KBM-7 (cell line): ENCODE measurements at regions of chr10 and their contacts with region 1.

Region 1: DNA sequence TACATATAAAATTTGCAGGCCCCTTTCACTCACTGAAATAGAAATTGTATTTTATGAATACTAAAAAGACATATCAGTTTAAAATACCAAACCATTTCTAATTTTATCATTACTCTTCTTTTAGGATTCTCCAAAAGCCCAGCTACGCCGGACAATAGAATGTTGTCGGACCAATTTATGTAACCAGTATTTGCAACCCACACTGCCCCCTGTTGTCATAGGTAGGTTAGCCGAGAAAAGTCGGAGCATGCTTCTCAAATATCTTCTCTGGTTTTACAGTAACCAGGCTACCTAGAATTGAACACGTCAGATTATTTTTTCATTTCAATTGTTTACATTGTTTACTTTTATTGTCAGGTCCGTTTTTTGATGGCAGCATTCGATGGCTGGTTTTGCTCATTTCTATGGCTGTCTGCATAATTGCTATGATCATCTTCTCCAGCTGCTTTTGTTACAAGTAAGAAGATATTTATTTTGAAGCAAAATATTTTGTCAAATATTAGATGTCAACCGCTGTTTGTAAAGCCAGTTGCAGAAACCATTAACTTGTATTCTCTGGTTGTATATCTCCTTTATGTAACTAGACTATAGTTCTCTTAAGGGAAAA is 57.6 kb downstream of the MMRN2 start:
- DNase-seq: peak; percentile 65

Region 2: GRCh38 chr10:86710987-86711512 is 188.7 kb before region 1 on chr10:
- in situ Hi-C with region 1: loop called (anchors 25 kb)
- DNase-seq: peak; percentile 94